ENCODE measurements at regions of chr4 and their contacts with region 1.

Region 1: DNA sequence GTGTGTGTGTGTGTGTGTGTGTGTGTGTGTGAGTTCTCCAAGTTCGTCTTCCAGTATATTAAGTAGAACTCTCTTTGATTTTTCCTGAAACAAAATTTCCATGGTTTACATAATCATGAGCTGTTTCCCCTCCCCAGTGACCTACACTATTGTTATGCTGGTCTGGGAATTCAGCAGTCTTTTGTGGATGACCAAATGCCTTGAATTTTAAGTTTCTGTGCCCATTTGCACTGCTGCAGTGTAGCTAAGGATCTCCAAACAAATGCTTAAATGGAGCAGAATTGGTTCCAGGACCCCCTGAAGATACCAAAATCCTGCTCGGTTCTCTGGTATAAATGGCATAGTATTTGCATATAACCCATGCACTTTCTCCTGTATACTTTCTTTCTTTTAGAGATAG is 77.2 kb upstream of the SLC34A2 start:
- DNase-seq: no peak
- ATAC-seq: no peak
- H3K4me3 ChIP-seq: no peak overlapping the region
- H3K27ac ChIP-seq: no peak overlapping the region
- H3K4me1 ChIP-seq: no peaks in the 10 kb centered on the region
- H3K27me3 ChIP-seq: no peaks in the 10 kb centered on the region
- CTCF ChIP-seq: no peak

Region 2: GRCh38 chr4:25552580-25553271 is 25.7 kb before region 1 on chr4:
- intact Hi-C with region 1: loop called in 1 of 2 experiments (anchors 1 kb)
- DNase-seq: no peak
- ATAC-seq: peak in 1 of 4 donors; percentile 49
- H3K4me3 ChIP-seq: no peak overlapping the region
- H3K27ac ChIP-seq: no peak overlapping the region
- H3K4me1 ChIP-seq: no peaks in the 10 kb centered on the region
- H3K27me3 ChIP-seq: no peaks in the 10 kb centered on the region
- CTCF ChIP-seq: no peak